Aorta (tissue), 5 donors: ENCODE measurements at regions of chr18 and their contacts with region 1.

Region 1: GRCh38 chr18:62610701-62611411 is 88.0 kb downstream of the ZCCHC2 start:
- DNase-seq: no peak
- ATAC-seq: peak; percentile 23
- H3K4me3 ChIP-seq: no peak overlapping the region
- H3K27ac ChIP-seq: no peak overlapping the region
- H3K4me1 ChIP-seq: no peaks in the 10 kb centered on the region
- H3K27me3 ChIP-seq: no peaks in the 10 kb centered on the region

Region 2: DNA sequence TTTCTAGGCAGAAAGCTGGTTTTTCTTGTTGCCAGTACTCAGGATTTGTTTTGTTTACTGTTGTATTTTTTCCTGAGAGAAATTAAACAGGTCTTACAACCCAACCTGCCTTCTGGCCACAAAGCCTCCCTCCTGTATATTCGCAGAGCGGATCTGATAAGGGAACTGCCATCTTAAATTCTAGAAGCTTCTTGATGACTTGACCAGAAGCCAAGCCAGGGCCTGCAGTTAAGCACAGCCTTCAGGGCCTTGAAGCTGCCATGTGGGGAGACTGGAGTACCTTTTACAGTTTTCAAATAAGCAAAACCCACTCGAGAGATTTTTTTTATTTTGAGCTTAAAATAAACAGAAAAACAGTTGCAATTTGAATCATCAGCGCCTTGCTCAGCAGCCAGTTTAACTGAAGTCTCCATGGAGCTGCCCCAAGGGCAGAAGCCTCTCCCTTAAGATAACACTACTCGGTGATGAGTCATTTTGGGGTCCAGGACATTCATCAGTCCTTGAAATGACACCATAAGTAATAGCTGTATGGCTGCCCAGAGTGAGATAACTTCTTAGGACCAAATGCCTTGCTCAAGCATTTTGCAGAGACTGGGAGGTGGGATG is 53.0 kb after region 1 on chr18:
- intact Hi-C with region 1: no loop called
- DNase-seq: no peak
- ATAC-seq: no peak
- H3K4me3 ChIP-seq: no peak overlapping the region
- H3K27ac ChIP-seq: no peak overlapping the region
- H3K4me1 ChIP-seq: no peaks in the 10 kb centered on the region
- H3K27me3 ChIP-seq: no peaks in the 10 kb centered on the region

Region 3: GRCh38 chr18:62702253-62702652 is 91.4 kb after region 1 on chr18:
- intact Hi-C with region 1: loop called in 1 of 2 experiments (anchors 10 kb)
- DNase-seq: no peak
- ATAC-seq: no peak
- H3K4me3 ChIP-seq: no peak overlapping the region
- H3K27ac ChIP-seq: no peak overlapping the region
- H3K4me1 ChIP-seq: no peaks in the 10 kb centered on the region
- H3K27me3 ChIP-seq: no peaks in the 10 kb centered on the region